ENCODE measurements at regions of chr1 and their contacts with region 1.

Region 1: DNA sequence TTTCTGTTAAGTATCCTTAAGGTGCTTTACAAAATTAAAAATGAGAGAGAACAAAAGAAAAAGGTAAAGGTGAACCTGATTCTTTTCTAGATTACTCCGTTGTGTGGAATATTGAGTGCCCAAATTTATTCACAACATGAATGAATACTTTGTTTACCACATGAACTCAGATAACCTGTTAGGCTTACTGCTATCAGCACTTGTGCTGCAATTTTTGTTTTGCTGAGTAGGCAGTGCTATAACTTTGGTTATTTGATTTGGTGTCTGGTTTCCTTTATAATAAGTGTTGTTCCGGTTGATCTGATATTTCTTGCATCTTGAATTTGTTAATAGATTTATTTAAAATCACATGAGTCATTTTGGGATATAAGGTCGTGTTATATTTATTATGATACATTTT is 195.9 kb downstream of the NEGR1 start:
- DNase-seq: no peak
- ATAC-seq: no peak
- H3K4me3 ChIP-seq: no peak overlapping the region
- H3K27ac ChIP-seq: no peak overlapping the region
- H3K4me1 ChIP-seq: no peaks in the 10 kb centered on the region
- H3K27me3 ChIP-seq: no peaks in the 10 kb centered on the region
- CTCF ChIP-seq: no peak

Region 2: GRCh38 chr1:72023063-72023930 is 63.1 kb before region 1 on chr1:
- CTCF ChIA-PET with region 1: interaction called, 12 read pairs
- POLR2A ChIA-PET with region 1: no interaction called
- in situ Hi-C with region 1: no loop called
- intact Hi-C with region 1: no loop called
- DNase-seq: no peak
- ATAC-seq: no peak
- H3K4me3 ChIP-seq: no peak overlapping the region
- H3K27ac ChIP-seq: no peak overlapping the region
- H3K4me1 ChIP-seq: no peaks in the 10 kb centered on the region
- H3K27me3 ChIP-seq: no peaks in the 10 kb centered on the region
- CTCF ChIP-seq: no peak

Measured in Panc1 (cell line).